ENCODE measurements at regions of chr4 and their contacts with region 1.

Region 1: DNA sequence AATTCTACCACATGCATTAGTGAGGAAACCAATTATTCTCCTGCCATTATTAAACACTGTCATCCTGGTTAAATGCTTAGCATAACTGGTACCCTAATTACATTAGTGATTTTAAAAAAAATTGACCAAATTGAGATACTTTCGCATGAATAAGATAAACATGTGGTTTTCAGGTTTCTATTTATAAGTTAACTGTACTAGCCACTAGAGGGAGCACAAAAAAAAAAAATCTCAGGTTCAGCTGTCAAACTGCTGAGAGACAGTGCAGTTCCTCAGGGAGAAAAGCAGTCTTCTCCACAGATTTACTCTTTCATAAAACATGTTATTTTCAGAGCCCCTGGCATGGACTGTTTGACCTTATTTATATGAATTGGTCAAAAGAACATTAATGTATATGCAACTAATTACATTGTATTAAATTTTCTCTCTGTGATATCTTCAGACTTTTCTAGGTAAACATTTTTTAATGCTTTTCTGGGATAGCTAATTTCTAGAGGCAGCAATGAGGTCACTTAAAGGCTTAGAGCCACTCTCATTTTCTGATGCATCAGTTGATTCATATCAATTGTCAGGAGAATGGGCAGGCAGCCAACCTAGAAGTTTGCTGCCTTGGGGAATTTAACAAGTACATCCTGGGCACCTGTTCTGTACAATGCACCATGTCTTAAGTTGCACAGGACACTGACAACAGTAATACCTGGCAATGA is 167.5 kb downstream of the CDS1 start:
- DNase-seq: no peak
- H3K4me3 ChIP-seq: no peak overlapping the region
- H3K27ac ChIP-seq: no peak overlapping the region
- H3K4me1 ChIP-seq: no peaks in the 10 kb centered on the region
- H3K27me3 ChIP-seq: no peaks in the 10 kb centered on the region
- CTCF ChIP-seq: peak in 2 of 3 experiments; percentile 51 to 56; a peak in 2 of 4 replicates
- EP300 ChIP-seq: no peak
- POLR2A ChIP-seq: no peak
- RAD21 ChIP-seq: peak; percentile 61 to 66

Region 2: GRCh38 chr4:84733343-84734033 is 16.9 kb before region 1 on chr4:
- CTCF ChIA-PET with region 1: interaction called, 15 read pairs
- POLR2A ChIA-PET with region 1: no interaction called
- DNase-seq: no peak
- H3K4me3 ChIP-seq: no peak overlapping the region
- H3K27ac ChIP-seq: no peak overlapping the region
- H3K4me1 ChIP-seq: no peaks in the 10 kb centered on the region
- H3K27me3 ChIP-seq: no peaks in the 10 kb centered on the region
- CTCF ChIP-seq: no peak
- EP300 ChIP-seq: no peak
- POLR2A ChIP-seq: no peak
- RAD21 ChIP-seq: no peak

Region 3: DNA sequence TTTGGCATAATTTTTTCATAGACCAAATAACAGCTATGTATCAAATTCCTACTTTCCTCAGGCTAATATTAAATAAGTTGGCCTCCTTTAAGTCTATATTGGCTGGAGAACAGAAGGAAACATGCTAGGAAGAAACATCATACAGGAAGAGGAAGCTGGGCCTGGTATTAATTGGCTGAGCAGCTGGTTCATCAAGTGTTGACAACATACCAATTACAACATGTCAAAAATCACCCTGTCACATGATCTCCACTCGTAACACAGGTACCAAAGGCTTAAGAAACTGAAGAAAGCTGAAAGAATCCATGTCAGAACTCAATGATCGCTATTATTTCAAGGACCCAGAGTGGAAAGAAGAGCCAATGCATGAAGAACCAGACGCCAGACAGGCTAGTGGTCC is 205.6 kb after region 1 on chr4:
- CTCF ChIA-PET with region 1: interaction called, 10 read pairs
- POLR2A ChIA-PET with region 1: no interaction called
- DNase-seq: no peak
- H3K4me3 ChIP-seq: no peak overlapping the region
- H3K27ac ChIP-seq: no peak overlapping the region
- H3K4me1 ChIP-seq: peaks cover 0 to 3% (median 1%) of the 10 kb centered on the region in 4 experiments; a peak in 4 of 7 replicates
- H3K27me3 ChIP-seq: no peaks in the 10 kb centered on the region
- CTCF ChIP-seq: no peak
- EP300 ChIP-seq: no peak
- POLR2A ChIP-seq: no peak
- RAD21 ChIP-seq: no peak

Region 4: GRCh38 chr4:84966383-84967242 is 216.2 kb after region 1 on chr4 and contains the start of gene WDFY3:
- CTCF ChIA-PET with region 1: interaction called, 35 read pairs
- POLR2A ChIA-PET with region 1: interaction called, 7 read pairs
- DNase-seq: peak; percentile 51 to 86
- H3K4me3 ChIP-seq: peak within 1 kb of the TSS; percentile 55 to 94 (median 84)
- H3K27ac ChIP-seq: peak within 1 kb of the TSS; percentile 87
- H3K4me1 ChIP-seq: peaks cover 0 to 8% (median 4%) of the 10 kb centered on the region in 4 experiments; a peak in 2 of 7 replicates
- H3K27me3 ChIP-seq: no peaks in the 10 kb centered on the region
- CTCF ChIP-seq: no peak
- EP300 ChIP-seq: no peak
- POLR2A ChIP-seq: peak; percentile 79; a peak in 2 of 3 replicates
- RAD21 ChIP-seq: no peak; a peak in 1 of 4 replicates
- total RNA-seq, gene WDFY3: 50.7 and 62.4 TPM in 2 replicates

Measured in H1 (cell line).